ENCODE measurements at regions of chr1 and their contacts with region 1.

Region 1: GRCh38 chr1:195394567-195394966 is 1213.7 kb downstream of the KCNT2 start:
- DNase-seq: no peak
- H3K4me3 Mint-ChIP-seq: no peak overlapping the region
- H3K27ac Mint-ChIP-seq: no peak overlapping the region
- H3K4me1 Mint-ChIP-seq: no peaks in the 10 kb centered on the region
- H3K27me3 Mint-ChIP-seq: no peaks in the 10 kb centered on the region

Region 2: GRCh38 chr1:194830387-194830786 is 564.2 kb before region 1 on chr1:
- intact Hi-C with region 1: no loop called
- DNase-seq: no peak
- H3K4me3 Mint-ChIP-seq: no peak overlapping the region
- H3K27ac Mint-ChIP-seq: no peak overlapping the region
- H3K4me1 Mint-ChIP-seq: no peaks in the 10 kb centered on the region
- H3K27me3 Mint-ChIP-seq: no peaks in the 10 kb centered on the region

Region 3: GRCh38 chr1:195328102-195328501 is 66.5 kb before region 1 on chr1:
- intact Hi-C with region 1: no loop called
- DNase-seq: no peak
- H3K4me3 Mint-ChIP-seq: no peak overlapping the region
- H3K27ac Mint-ChIP-seq: no peak overlapping the region
- H3K4me1 Mint-ChIP-seq: no peaks in the 10 kb centered on the region
- H3K27me3 Mint-ChIP-seq: no peaks in the 10 kb centered on the region

Region 4: DNA sequence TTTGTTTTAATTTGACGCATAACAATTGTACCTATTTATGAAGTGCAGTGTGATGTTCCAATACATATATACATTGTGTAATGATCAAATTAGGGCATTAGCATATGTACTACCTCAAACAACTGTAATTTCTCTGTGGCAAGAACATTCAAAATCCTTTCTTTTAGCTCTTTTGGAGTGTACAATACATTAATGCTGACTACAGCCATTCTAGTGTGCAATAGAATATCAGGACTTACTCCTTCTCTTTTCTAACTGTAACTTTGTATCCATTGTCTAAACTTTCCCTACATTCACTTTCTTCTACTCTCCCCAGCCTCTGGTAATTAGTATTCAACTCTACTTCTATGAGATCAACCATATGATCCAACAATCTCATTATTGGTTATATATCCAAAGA is 36.3 kb after region 1 on chr1:
- intact Hi-C with region 1: loop called (anchors 1 kb)
- DNase-seq: no peak
- H3K4me3 Mint-ChIP-seq: no peak overlapping the region
- H3K27ac Mint-ChIP-seq: no peak overlapping the region
- H3K4me1 Mint-ChIP-seq: no peaks in the 10 kb centered on the region
- H3K27me3 Mint-ChIP-seq: no peaks in the 10 kb centered on the region

Measured in activated CD4-positive, alpha-beta T cell treated with anti-CD3 and anti-CD28 coated beads, Interleukin-2, amount 10 ng/mL, durations not matched to agents 24 days and 14 days (primary cell).